ENCODE measurements at regions of chr1 and their contacts with region 1.

Region 1: DNA sequence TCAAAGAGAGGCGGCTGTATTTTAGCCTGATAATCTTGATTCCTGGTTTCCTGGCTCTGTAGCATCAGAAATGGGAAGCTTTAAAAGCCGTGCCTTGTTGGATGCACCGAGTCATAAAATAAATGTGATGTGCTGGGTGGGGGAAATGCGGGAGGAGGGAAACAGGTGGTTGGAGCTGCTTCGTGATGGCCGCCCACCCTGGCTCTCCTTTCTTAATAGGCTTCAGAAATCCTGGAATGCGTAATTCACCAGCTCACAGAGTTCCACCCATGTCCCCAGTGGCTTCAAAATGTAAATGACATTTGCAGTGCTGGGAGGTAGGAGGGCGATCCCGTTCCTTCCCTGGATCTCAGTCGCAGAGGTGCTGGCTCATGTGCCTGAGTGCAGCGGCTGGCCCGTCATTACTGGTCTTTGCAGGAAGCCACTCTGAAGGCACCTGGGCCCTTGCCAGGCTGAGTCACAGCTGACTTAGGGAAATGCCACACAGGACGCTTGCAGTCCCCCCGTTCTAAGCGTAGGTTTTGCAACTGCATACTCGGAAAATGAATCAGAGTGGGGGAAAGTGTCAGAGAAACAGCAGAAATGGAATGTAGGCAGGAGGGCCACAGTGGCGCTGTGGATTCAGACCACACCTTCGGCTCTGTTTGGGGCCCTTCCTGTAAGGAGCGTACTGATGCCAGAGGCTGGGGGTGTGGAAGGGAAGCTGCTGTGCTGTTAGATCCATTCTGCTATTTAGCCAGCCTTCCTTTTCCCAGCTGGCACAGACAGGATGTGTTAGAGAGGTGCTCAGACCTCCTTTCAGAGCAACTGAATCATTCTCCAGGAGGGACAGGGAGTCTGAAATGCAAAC is 37.6 kb downstream of the GALNT2 start:
- DNase-seq: peak; percentile 63
- H3K4me3 Mint-ChIP-seq: peak overlapping the region; percentile 66
- H3K27ac Mint-ChIP-seq: peak overlapping the region; percentile 91
- H3K4me1 Mint-ChIP-seq: peaks cover 85% of the 10 kb centered on the region
- H3K27me3 Mint-ChIP-seq: peaks cover 1% of the 10 kb centered on the region

Region 2: GRCh38 chr1:229558571-229559335 is 545.9 kb before region 1 on chr1 and contains the start of gene ABCB10:
- intact Hi-C with region 1: loop called (anchors 5 kb)
- DNase-seq: peak; percentile 81
- H3K4me3 Mint-ChIP-seq: peak within 1 kb of the TSS; percentile 90
- H3K27ac Mint-ChIP-seq: peak within 1 kb of the TSS; percentile 83
- H3K4me1 Mint-ChIP-seq: peaks cover 49% of the 10 kb centered on the region
- H3K27me3 Mint-ChIP-seq: no peaks in the 10 kb centered on the region
- total RNA-seq, gene ABCB10: 46.2 and 47.0 TPM in 2 replicates

Region 3: DNA sequence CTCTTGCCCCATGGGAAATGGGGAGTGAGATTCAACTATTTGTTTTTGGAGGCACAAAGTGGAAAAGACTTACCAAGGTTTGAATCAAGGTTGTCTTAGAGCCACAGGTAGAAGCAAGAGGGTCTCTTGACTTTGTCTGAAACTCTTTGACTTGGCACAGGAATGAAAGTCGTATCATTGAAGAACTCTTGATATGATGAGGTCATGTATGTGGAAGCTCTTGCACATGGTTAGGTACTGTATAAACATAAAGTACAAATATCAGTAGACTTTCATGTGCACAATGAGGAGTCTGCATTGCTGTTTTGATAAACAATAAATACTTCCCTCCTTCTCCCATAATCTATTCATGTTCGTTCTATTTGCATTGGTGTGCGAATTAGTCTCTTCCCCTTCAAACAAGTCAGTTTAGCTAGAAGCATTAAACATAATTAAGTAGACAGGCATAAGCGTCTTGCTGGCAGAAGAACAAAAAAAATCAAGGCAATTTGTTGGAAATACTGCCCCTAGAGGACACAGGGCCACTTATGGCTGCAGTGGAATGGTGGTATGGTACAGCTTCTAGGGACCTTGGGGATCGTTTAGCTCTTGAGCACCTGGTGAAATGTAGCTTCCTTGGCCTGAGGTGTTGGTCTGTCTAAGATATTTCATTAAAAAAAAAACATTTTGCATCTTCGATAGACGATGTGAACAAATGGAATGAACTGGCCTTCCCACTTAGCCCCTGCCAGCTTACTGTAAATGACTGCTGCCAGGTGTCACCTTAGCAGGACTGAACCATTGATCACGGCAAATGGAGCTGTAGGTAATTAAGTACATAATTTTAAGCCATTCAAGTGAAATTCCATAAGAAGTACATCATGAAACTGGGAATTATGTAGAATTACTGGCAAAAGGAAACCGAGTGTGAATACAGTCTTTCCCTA is 255.6 kb before region 1 on chr1:
- intact Hi-C with region 1: no loop called
- DNase-seq: no peak
- H3K4me3 Mint-ChIP-seq: no peak overlapping the region
- H3K27ac Mint-ChIP-seq: no peak overlapping the region
- H3K4me1 Mint-ChIP-seq: no peaks in the 10 kb centered on the region
- H3K27me3 Mint-ChIP-seq: peaks cover 7% of the 10 kb centered on the region

Region 4: DNA sequence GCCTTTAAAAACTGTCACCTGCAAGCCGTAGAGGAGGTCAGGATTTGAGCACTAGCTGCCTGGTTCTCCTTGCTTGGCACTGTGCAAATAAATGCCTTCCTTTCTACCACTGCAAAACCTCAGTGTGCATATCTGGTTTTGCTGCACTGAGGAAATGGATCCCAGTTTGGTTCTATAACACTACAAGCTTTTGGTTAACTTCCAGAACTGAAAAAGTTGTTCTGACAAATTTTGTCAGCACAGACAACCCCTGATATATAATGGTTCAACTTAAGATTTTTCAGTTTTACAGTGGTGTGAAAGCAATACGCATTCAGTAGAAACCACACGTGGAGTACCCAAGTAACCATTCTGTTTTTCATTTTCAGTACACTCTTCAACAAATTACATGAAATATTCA is 67.4 kb before region 1 on chr1:
- intact Hi-C with region 1: loop called (anchors 1 kb)
- DNase-seq: no peak
- H3K4me3 Mint-ChIP-seq: no peak overlapping the region
- H3K27ac Mint-ChIP-seq: no peak overlapping the region
- H3K4me1 Mint-ChIP-seq: peaks cover 6% of the 10 kb centered on the region
- H3K27me3 Mint-ChIP-seq: peaks cover 2% of the 10 kb centered on the region

Region 5: GRCh38 chr1:230123280-230124185 is 18.9 kb after region 1 on chr1:
- intact Hi-C with region 1: loop called (anchors 1 kb)
- DNase-seq: peak; percentile 47
- H3K4me3 Mint-ChIP-seq: peak overlapping the region; percentile 45
- H3K27ac Mint-ChIP-seq: peak overlapping the region; percentile 73
- H3K4me1 Mint-ChIP-seq: peaks cover 68% of the 10 kb centered on the region
- H3K27me3 Mint-ChIP-seq: no peaks in the 10 kb centered on the region

Region 6: DNA sequence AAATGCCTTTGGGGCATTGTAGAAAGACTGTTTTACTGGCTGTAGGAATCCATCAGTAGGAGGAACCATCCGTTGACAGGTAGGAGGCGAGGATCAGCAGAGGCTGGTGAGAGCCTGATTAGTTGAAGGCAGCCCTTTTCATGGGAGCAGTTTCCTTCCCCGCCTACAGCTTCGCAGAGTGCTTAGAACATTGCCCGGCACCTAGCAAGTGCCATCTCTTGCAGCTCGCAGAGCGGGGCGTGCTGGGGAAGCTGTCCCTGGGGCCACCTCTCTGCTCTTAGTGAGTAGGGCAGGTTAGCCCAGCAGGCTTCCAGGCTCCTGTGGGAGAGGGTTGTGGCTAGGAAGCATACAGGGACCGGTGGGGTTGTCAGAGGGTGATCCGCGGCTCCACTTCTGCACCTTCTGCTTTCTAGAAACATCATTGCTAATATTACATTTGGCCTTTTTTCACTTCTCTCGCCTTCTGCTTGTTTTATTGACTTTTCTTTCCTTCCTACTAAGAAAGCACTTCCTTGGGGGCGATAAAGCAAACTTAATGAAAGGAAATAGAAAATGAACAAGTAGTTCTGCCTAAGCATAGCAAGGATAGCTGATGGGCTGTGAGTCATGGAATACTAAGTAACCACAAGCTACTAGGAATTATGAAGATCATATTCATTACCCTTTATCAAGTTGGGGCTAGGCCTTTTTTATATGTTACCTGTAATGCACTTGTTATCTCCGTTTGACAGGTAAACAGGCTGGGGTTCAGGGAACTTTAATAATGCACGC is 139.1 kb after region 1 on chr1:
- intact Hi-C with region 1: loop called (anchors 1 kb)
- DNase-seq: no peak
- H3K4me3 Mint-ChIP-seq: no peak overlapping the region
- H3K27ac Mint-ChIP-seq: no peak overlapping the region
- H3K4me1 Mint-ChIP-seq: peaks cover 47% of the 10 kb centered on the region
- H3K27me3 Mint-ChIP-seq: no peaks in the 10 kb centered on the region

Region 7: GRCh38 chr1:230867903-230868735 is 763.5 kb after region 1 on chr1 and contains the start of gene C1orf198:
- intact Hi-C with region 1: loop called (anchors 5 kb)
- DNase-seq: peak; percentile 59
- H3K4me3 Mint-ChIP-seq: peak within 1 kb of the TSS; percentile 87
- H3K27ac Mint-ChIP-seq: peak within 1 kb of the TSS; percentile 80
- H3K4me1 Mint-ChIP-seq: peaks cover 28% of the 10 kb centered on the region
- H3K27me3 Mint-ChIP-seq: peaks cover 39% of the 10 kb centered on the region
- total RNA-seq, gene C1orf198: 14.1 and 14.6 TPM in 2 replicates

Measured in activated T-helper 1 cell treated with anti-CD3 and anti-CD28 coated beads, Interleukin-12 subunit alpha, Interleukin-12 subunit beta, Interleukin-2, Interleukin-4 antibody, amounts not matched to agents 30 ng/mL and 10 ng/mL and 1 ng/mL, durations not matched to agents 14 hours and 24 hours and 36 hours (primary cell).